Right cardiac atrium (tissue), 5 donors: ENCODE measurements at regions of chr11 and their contacts with region 1.

Region 1: DNA sequence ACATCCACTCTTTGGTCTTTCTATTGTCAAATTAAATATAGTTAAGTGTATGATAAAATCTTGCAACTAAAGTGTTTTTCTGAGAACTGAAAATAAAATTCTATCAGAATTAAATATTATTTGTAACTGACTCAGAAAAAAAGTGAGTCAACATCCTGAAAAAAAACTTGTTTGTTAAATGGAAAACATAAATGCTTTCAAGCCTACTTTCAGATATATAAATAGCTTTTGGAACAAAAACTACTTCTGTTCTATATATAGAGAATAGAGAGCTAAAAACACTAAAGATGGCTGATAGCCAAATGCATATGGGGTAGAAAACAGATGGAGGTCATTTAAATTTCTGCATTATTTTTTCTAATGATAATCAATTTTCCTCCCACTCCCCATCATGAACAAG is 61.8 kb downstream of the PIK3C2A start:
- DNase-seq: no peak
- ATAC-seq: no peak
- H3K4me3 ChIP-seq: no peak overlapping the region
- H3K27ac ChIP-seq: no peak overlapping the region
- H3K4me1 ChIP-seq: peaks cover 3% of the 10 kb centered on the region
- H3K27me3 ChIP-seq: no peaks in the 10 kb centered on the region

Region 2: GRCh38 chr11:17098038-17098437 is 47.9 kb before region 1 on chr11:
- intact Hi-C with region 1: loop called in 1 of 4 experiments (anchors 10 kb)
- DNase-seq: no peak
- ATAC-seq: peak; percentile 18 to 59
- H3K4me3 ChIP-seq: no peak overlapping the region
- H3K27ac ChIP-seq: no peak overlapping the region
- H3K4me1 ChIP-seq: no peaks in the 10 kb centered on the region
- H3K27me3 ChIP-seq: no peaks in the 10 kb centered on the region

Region 3: GRCh38 chr11:17439316-17439782 is 293.4 kb after region 1 on chr11:
- intact Hi-C with region 1: no loop called
- DNase-seq: no peak
- ATAC-seq: no peak
- H3K4me3 ChIP-seq: no peak overlapping the region
- H3K27ac ChIP-seq: no peak overlapping the region
- H3K4me1 ChIP-seq: no peaks in the 10 kb centered on the region
- H3K27me3 ChIP-seq: no peaks in the 10 kb centered on the region